Left ventricle myocardium inferior (tissue), 1 donor: ENCODE measurements at regions of chr19 and their contacts with region 1.

Region 1: DNA sequence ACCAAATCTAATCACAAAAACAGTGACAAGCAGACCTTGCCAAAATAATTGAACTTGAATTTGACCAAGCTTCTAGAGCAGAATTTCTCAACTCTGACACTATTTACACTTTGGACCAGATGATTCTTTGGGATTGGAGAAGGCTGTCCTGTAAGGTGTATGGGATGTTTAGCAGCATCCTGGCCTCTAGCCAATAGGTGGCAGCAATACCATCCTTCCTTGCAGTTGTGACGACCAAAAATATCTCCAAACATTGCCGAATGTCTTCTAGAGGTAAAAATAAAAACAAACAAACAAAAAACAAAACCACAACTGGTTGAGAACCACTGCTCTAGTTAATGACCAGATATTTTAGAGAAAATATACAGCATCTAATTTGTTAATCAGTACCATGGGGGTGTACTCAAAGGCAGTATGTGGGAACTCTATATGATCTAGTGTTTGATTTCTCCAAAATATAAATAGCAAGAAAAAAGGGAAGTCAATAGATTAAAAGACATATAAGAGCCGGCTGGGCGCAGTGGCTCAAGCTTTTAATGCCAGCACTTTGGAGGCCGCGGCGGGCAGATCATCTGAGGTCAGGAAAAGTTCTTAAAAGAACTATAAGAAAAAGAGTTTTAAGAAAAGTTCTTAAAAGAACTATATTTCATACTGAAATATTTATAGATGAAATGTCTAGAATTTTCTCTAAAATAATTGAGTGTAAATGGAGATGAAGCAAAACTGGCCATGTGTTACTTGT is 60.9 kb upstream of the ZNF527 start:
- DNase-seq: no peak
- H3K4me3 ChIP-seq: no peak overlapping the region
- H3K27ac ChIP-seq: no peak overlapping the region
- H3K4me1 ChIP-seq: peaks cover 14% of the 10 kb centered on the region
- H3K27me3 ChIP-seq: no peaks in the 10 kb centered on the region
- CTCF ChIP-seq: no peak

Region 2: GRCh38 chr19:37087110-37087509 is 222.9 kb before region 1 on chr19:
- intact Hi-C with region 1: no loop called
- DNase-seq: no peak
- H3K4me3 ChIP-seq: no peak overlapping the region
- H3K27ac ChIP-seq: no peak overlapping the region
- H3K4me1 ChIP-seq: no peaks in the 10 kb centered on the region
- H3K27me3 ChIP-seq: no peaks in the 10 kb centered on the region
- CTCF ChIP-seq: no peak

Region 3: DNA sequence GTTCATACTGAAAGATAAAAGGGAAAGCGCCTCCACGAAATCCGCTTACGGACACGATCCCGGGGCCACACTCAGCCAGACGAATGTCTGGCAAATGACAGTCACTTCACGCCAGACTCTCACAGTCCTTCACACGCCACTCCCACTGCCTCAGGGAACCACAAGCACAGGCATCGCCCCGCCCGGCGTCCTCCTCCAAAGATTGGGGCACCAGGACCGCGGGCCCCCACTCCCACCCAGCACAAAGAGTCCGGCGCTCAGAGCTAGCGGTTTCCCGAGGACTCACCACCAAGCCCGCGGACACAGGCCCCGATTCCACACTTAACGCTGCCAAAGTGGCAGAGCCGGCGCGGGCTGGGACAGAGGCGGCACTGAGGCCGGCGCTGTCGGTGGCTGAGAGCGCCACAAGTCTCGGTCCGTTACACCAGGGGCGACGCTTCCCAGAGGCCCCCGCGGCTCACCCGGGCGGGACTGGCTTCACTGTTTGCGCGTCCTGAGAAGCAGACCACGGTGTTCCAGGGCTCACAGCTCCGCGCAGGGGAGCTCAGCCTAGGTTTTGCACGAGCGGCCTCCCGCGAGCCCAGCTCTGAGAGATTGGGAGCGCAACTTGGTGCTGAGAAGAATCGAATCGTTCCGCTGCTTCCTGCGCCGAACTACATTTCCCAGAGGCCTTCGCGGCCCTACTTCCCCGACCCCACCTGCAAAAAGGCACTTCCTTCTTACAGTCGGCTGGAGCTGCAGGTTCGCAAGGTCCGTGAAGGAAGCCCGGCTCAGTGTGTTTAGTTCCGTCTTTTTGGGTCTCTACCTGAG is 157.0 kb after region 1 on chr19 and contains the start of gene ZNF569:
- intact Hi-C with region 1: loop called (anchors 10 kb)
- DNase-seq: peak; percentile 88
- H3K4me3 ChIP-seq: peak within 1 kb of the TSS; percentile 89
- H3K27ac ChIP-seq: peak within 1 kb of the TSS; percentile 98
- H3K4me1 ChIP-seq: peaks cover 48% of the 10 kb centered on the region
- H3K27me3 ChIP-seq: no peaks in the 10 kb centered on the region
- CTCF ChIP-seq: no peak
- total RNA-seq, gene ZNF569: 6.5 TPM